Endothelial cell of umbilical vein (primary cell): ENCODE measurements at regions of chr3 and their contacts with region 1.

Region 1: GRCh38 chr3:153252963-153253362 is 90.9 kb downstream of the RAP2B start:
- DNase-seq: no peak
- H3K4me3 ChIP-seq: no peak overlapping the region
- H3K27ac ChIP-seq: no peak overlapping the region
- H3K4me1 ChIP-seq: peaks cover 21% of the 10 kb centered on the region
- H3K27me3 ChIP-seq: no peaks in the 10 kb centered on the region
- CTCF ChIP-seq: no peak
- POLR2A ChIP-seq: no peak

Region 2: GRCh38 chr3:153232910-153233271 is 20.1 kb before region 1 on chr3:
- CTCF ChIA-PET with region 1: no interaction called
- POLR2A ChIA-PET with region 1: no interaction called
- dilution Hi-C with region 1: no loop called
- intact Hi-C with region 1: loop called (anchors 2 kb)
- DNase-seq: peak; percentile 54
- H3K4me3 ChIP-seq: no peak overlapping the region
- H3K27ac ChIP-seq: no peak overlapping the region
- H3K4me1 ChIP-seq: peaks cover 4% of the 10 kb centered on the region
- H3K27me3 ChIP-seq: no peaks in the 10 kb centered on the region
- CTCF ChIP-seq: no peak
- POLR2A ChIP-seq: no peak

Region 3: DNA sequence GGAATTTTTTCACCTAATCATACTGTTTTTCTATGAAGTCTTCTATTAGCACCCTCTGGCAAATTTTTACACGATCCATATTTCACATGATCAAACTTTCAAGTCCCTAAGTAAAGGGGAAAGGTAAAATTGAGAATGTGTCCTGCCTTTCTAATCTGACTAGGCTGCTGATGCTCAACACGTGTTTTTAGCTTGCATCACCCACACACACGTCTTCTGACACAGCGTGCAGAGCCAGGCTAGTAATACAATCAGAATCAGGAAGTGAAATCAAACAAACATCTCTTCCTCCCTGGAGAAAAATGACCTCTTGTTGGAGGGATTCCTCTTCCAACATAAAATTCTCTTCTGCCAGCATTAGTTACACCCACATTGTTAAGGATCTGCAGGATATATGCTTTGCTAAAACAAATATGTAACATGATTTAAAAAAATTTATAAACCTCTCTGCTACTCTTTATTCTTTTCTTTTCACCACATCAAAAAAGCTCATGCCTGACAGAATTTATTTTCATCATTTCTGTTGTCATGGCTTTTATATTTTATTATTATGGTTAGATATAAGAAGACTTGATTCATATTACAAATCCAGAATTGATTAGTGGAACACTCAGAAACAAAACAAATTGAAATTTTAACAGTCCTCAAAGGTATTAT is 31.4 kb after region 1 on chr3:
- CTCF ChIA-PET with region 1: no interaction called
- POLR2A ChIA-PET with region 1: no interaction called
- dilution Hi-C with region 1: no loop called
- intact Hi-C with region 1: loop called (anchors 2 kb)
- DNase-seq: peak; percentile 73
- H3K4me3 ChIP-seq: no peak overlapping the region
- H3K27ac ChIP-seq: peak overlapping the region; percentile 35
- H3K4me1 ChIP-seq: peaks cover 15% of the 10 kb centered on the region
- H3K27me3 ChIP-seq: no peaks in the 10 kb centered on the region
- CTCF ChIP-seq: no peak
- POLR2A ChIP-seq: no peak

Region 4: GRCh38 chr3:153305189-153305588 is 52.2 kb after region 1 on chr3:
- CTCF ChIA-PET with region 1: no interaction called
- POLR2A ChIA-PET with region 1: no interaction called
- dilution Hi-C with region 1: no loop called
- intact Hi-C with region 1: no loop called
- DNase-seq: no peak
- H3K4me3 ChIP-seq: no peak overlapping the region
- H3K27ac ChIP-seq: no peak overlapping the region
- H3K4me1 ChIP-seq: no peaks in the 10 kb centered on the region
- H3K27me3 ChIP-seq: no peaks in the 10 kb centered on the region
- CTCF ChIP-seq: no peak
- POLR2A ChIP-seq: no peak